ENCODE measurements at regions of chr11 and their contacts with region 1.

Region 1: DNA sequence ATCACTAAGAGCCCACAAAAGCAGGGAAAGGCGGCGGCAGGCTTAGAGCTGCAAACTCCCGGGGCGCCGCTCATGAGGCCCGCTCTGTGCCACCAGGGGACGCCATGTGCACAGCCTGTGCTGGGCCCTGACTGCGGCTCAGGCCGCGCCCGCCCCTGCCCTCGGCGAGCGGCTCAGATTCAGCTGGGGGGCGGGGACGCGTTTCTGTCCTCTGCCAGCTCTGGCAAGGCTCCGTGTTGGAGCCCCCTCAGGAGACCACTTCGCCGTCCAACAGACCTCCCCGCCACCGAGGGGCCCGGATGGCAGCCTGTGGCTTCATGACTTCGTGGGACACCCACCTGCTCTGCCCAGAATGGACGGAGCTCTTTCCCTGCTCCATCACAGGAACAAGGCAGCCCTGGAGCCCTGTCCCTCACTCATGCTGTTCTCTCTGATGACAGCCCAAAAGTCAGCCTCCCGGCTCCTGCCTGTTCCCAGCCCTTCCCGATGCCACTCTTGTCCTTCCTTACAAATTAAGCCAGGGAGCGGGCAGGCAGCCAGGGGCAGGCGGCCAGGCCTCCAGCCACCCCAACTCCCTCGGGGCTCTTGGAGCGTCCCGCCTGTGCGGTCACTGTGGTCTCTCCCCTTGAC is 69.1 kb downstream of the NAT10 start:
- DNase-seq: peak; percentile 94
- H3K4me3 ChIP-seq: peak overlapping the region; percentile 33 to 54 (median 42)
- H3K27ac ChIP-seq: peak overlapping the region in 1 of 4 donors; percentile 13
- H3K4me1 ChIP-seq: peaks cover 7 to 19% (median 15%) of the 10 kb centered on the region in 4 donors
- H3K27me3 ChIP-seq: no peaks in the 10 kb centered on the region
- CTCF ChIP-seq: peak; percentile 92 to 93 (median 92)
- EP300 ChIP-seq: no peak
- POLR2A ChIP-seq: no peak

Region 2: DNA sequence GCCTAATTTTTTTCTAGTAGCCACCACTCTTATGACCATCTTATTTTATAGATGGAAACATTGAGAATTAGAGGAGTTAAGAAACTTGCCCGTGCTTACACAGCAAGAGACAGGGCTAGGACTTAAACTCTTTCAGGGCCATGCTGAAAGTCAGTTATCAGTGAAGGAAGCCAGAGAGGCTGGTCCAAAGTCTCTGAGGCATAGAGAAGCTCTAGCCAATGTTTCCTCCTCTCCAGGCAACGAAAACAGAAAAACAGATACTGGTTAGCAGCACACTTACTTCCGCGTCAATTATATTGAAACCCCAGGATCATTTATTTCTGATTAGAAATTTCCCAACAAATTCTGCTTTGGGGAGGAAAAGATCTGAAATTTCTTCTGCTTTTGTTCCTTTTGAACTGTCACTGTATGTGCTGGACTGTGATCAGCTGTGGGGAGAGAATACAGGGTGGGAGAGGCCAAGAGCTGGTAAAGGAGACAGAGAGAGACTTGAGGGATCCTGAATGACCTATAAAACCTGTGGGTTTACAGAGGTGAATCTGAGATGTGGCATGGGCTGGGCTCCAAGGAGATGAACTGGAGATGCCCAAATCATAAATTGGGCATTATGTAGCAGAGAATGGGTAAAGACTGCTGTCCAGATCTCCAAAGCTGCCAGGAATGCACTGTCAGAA is 160.5 kb before region 1 on chr11:
- intact Hi-C with region 1: no loop called
- DNase-seq: no peak
- H3K4me3 ChIP-seq: no peak overlapping the region
- H3K27ac ChIP-seq: no peak overlapping the region
- H3K4me1 ChIP-seq: no peaks in the 10 kb centered on the region
- H3K27me3 ChIP-seq: no peaks in the 10 kb centered on the region
- CTCF ChIP-seq: no peak
- EP300 ChIP-seq: no peak
- POLR2A ChIP-seq: no peak

Region 3: GRCh38 chr11:34091825-34092224 is 82.7 kb before region 1 on chr11:
- intact Hi-C with region 1: no loop called
- DNase-seq: no peak
- H3K4me3 ChIP-seq: no peak overlapping the region
- H3K27ac ChIP-seq: no peak overlapping the region
- H3K4me1 ChIP-seq: no peaks in the 10 kb centered on the region
- H3K27me3 ChIP-seq: no peaks in the 10 kb centered on the region
- CTCF ChIP-seq: no peak
- EP300 ChIP-seq: no peak
- POLR2A ChIP-seq: no peak

Region 4: DNA sequence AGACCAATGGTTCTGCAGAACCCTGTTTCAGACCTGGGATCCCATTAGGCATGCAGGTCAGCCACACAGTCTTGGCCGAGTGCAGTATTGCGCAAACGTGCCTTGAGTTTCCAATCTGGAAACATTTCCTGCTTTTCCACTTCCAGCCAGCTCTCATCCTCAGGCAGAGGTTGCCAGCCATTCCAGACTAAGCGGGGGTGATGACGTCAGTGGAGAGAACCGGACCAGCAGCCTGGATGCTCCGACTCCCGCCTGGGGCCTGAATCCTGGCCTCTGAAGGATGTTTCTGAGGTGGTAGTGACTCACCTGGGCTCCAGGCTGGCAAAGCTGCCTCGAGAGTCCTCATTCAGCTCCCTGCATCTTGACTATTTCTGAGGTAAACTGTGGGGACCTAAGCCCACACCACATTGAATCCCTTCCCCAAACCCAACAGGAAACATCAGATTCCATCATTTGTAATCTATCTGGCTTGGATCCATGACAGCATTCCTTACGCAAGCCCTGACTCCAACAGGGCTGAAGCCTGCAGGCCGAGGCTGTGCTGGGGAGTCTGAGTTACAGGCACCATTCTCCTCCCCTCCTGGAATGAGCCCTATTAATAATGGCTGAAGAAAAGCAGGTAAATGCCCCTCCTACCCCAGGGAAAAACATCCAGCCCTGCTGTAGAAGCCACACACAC is 100.3 kb after region 1 on chr11:
- intact Hi-C with region 1: loop called (anchors 10 kb)
- DNase-seq: peak; percentile 95
- H3K4me3 ChIP-seq: no peak overlapping the region
- H3K27ac ChIP-seq: peak overlapping the region; percentile 40 to 69 (median 54)
- H3K4me1 ChIP-seq: peaks cover 0 to 16% (median 12%) of the 10 kb centered on the region in 4 donors
- H3K27me3 ChIP-seq: no peaks in the 10 kb centered on the region
- CTCF ChIP-seq: no peak
- EP300 ChIP-seq: no peak
- POLR2A ChIP-seq: no peak

Region 5: DNA sequence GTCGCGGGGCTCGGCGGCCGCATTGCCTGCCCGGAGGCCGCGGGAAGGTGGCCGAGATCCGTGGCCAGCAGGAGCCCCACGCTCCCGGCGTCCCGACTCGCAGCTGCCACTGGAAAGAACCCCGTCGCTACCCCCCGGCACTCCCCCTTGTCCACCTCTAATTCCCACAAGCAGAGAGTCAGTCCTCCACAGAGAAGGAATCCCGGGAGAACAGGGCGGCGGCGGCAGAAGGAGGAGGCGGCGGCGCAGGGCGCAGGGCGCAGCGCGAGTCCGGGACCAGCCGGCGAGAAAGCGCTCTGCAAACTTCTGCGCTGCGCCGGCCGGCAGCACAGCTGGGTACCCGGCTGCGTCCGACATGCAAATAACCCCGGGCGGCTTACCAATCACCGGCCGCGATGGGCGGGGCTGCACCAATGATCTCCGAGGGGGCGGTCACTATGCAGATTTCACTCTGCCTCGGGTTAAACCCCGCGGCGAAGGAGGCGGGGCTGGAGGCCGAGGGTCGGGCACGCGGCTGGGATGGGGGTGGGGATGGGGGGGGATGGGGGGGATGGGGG is 183.3 kb after region 1 on chr11 and contains the start of gene ABTB2:
- intact Hi-C with region 1: loop called (anchors 1 kb)
- DNase-seq: peak; percentile 99
- H3K4me3 ChIP-seq: peak within 1 kb of the TSS; percentile 64 to 79 (median 68)
- H3K27ac ChIP-seq: peak within 1 kb of the TSS; percentile 84 to 90 (median 86)
- H3K4me1 ChIP-seq: peaks cover 27 to 46% (median 39%) of the 10 kb centered on the region in 4 donors
- H3K27me3 ChIP-seq: peaks cover 0 to 3% (median 0%) of the 10 kb centered on the region in 4 donors
- CTCF ChIP-seq: no peak
- EP300 ChIP-seq: no peak
- POLR2A ChIP-seq: peak; percentile 76
- total RNA-seq, gene ABTB2: 5.0 to 8.0 (median 7.2) TPM

Region 6: DNA sequence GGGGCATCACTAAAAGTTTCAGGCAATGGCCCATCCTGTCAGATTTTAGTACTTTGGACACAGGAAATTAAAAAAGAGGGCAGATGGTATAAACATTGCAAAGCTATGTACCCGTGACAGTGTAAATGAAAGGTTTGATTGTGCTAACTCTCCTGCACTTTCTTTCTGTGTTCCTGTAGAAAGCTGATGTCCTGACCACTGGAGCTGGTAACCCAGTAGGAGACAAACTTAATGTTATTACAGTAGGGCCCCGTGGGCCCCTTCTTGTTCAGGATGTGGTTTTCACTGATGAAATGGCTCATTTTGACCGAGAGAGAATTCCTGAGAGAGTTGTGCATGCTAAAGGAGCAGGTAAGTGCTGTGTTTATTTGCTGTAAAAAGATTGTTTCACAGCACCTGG is 274.5 kb after region 1 on chr11:
- intact Hi-C with region 1: loop called (anchors 10 kb)
- DNase-seq: no peak
- H3K4me3 ChIP-seq: no peak overlapping the region
- H3K27ac ChIP-seq: no peak overlapping the region
- H3K4me1 ChIP-seq: peaks cover 0 to 36% (median 7%) of the 10 kb centered on the region in 4 donors
- H3K27me3 ChIP-seq: no peaks in the 10 kb centered on the region
- CTCF ChIP-seq: no peak
- EP300 ChIP-seq: no peak
- POLR2A ChIP-seq: no peak

Region 7: GRCh38 chr11:34492806-34493414 is 318.4 kb after region 1 on chr11:
- intact Hi-C with region 1: loop called (anchors 10 kb)
- DNase-seq: no peak
- H3K4me3 ChIP-seq: no peak overlapping the region
- H3K27ac ChIP-seq: no peak overlapping the region
- H3K4me1 ChIP-seq: no peaks in the 10 kb centered on the region
- H3K27me3 ChIP-seq: peaks cover 0 to 12% (median 4%) of the 10 kb centered on the region in 4 donors
- CTCF ChIP-seq: peak; percentile 44 to 66 (median 64)
- EP300 ChIP-seq: no peak
- POLR2A ChIP-seq: no peak

Measured in esophagus muscularis mucosa (tissue), 4 donors.